ENCODE measurements at regions of chr2 and their contacts with region 1.

Region 1: DNA sequence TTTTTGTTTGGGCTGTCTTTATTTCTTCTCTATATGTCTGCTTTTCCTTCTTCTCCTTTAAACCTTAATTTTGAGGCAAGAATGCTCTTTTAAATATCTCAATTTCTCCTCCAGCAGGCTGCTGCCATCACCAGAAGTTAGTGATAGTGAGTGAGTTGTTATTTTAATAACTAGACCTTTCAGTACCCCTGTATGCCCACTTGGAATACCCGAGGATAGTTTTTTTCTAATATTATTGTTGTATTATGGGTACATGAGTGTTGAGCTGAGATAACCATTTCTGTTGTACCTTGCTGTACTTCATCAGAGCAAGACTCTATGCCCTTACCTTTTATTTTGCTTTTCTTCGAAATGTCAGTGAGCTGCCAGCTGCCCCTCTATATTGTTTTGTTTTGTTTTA is 50.1 kb downstream of the PPM1B start:
- DNase-seq: no peak
- ATAC-seq: no peak
- H3K4me3 Mint-ChIP-seq: no peak overlapping the region
- H3K27ac Mint-ChIP-seq: no peak overlapping the region
- H3K4me1 Mint-ChIP-seq: peaks cover 2% of the 10 kb centered on the region
- H3K27me3 Mint-ChIP-seq: no peaks in the 10 kb centered on the region
- CTCF ChIP-seq: no peak

Region 2: DNA sequence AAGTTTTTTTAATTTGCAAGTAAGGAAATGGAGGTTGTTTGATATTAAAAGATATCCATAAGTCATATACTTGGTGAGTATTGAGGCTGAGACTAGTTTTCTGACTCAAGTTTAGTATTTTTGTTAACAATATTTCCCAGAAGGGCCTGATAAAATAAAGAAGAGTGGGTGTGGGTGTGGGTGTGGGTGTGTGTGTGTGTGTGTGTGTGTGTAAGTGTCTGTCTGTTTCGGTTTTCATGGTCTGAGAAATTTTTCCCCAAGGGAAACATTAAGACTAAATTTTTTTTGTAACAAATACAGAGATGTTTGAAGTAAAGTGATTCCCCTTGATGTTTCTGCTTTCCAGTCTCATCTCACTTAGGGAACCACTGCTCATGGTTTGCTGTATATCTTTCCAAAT is 13.6 kb before region 1 on chr2:
- CTCF ChIA-PET with region 1: no interaction called
- POLR2A ChIA-PET with region 1: no interaction called
- intact Hi-C with region 1: loop called (anchors 2 kb)
- DNase-seq: no peak
- ATAC-seq: no peak
- H3K4me3 Mint-ChIP-seq: no peak overlapping the region
- H3K27ac Mint-ChIP-seq: no peak overlapping the region
- H3K4me1 Mint-ChIP-seq: peaks cover 17% of the 10 kb centered on the region
- H3K27me3 Mint-ChIP-seq: no peaks in the 10 kb centered on the region
- CTCF ChIP-seq: no peak